HCT116 (cell line): ENCODE measurements at regions of chr12 and their contacts with region 1.

Region 1: DNA sequence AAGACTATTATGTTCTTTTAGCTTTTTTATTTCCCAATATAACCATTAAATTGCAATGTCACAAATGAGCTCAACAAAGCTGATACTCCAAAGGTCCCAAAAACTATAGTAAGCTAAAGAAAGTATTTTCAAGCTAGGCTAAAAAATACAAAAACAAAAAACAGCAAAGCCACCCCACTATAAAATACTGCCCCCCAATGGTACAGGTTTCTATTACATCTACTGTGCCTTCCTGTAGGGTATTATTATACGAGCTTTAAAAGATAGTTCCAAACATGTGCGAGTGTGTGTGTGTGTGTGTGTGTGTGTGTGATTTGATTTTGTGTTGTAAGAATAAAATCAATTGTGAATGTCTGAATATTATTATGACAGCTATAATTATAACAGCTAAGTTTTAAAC is 1.1 kb downstream of the IFNG start:
- DNase-seq: peak; percentile 40
- ATAC-seq: peak; percentile 72
- H3K4me3 ChIP-seq: no peak overlapping the region
- H3K27ac ChIP-seq: no peak overlapping the region
- H3K4me1 ChIP-seq: peaks cover 0 to 5% of the 10 kb centered on the region in 2 experiments; a peak in 1 of 4 replicates
- H3K27me3 ChIP-seq: no peaks in the 10 kb centered on the region
- CTCF ChIP-seq: peak; percentile 57 to 76 (median 60); a peak in 5 of 6 replicates
- POLR2A ChIP-seq: no peak
- RAD21 ChIP-seq: peak; percentile 66

Region 2: DNA sequence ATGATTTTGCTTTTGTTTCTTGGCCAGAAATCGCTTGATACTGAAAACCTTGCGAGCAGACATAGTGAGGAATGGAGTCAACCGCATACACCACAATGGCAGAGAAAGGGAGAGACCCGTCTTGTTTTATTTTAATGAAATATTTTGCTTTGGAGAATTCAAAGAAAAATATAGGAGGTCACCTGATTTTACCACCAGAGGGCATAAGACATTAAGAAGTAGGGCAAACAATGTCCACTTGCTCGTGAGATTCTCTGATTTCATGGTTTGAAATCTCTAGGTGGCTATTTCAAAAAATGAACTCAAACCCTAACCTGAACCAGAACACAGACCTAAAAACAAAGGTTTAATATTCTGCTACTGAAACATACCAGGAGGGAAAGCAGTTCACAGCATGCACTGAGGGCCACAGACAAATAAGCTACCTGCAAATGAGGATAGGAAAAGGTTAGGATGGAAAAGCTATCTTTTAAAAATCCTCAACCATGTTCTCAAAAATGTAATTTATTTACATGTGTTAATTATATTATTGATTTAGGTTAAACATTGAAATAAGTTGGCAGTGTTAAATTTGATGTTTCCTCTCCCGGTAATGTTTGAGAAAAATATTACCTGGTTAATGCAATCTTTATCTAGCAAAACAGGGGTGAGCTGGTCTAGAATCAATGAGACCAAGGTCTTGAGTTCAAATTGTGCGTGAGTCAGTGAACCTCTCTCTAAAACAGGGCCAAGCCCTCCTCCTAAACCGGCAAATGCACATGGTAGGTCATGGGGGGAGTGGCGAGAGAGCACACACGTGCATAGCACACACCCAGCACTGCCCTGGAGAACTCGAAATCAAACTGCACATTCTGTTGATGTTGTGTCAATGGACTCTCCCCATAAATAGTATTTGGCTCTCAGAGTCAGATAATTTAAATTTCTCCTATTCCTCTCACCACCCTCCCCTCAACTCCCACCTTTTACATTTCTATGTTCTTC is 156.7 kb before region 1 on chr12:
- CTCF ChIA-PET with region 1: interaction called, 5 read pairs
- POLR2A ChIA-PET with region 1: no interaction called
- RAD21 ChIA-PET with region 1: no interaction called
- intact Hi-C with region 1: loop called (anchors 2 kb)
- DNase-seq: no peak
- ATAC-seq: peak; percentile 58
- H3K4me3 ChIP-seq: no peak overlapping the region
- H3K27ac ChIP-seq: no peak overlapping the region
- H3K4me1 ChIP-seq: no peaks in the 10 kb centered on the region
- H3K27me3 ChIP-seq: no peaks in the 10 kb centered on the region
- CTCF ChIP-seq: peak; percentile 36 to 62 (median 50); a peak in 5 of 6 replicates
- POLR2A ChIP-seq: no peak
- RAD21 ChIP-seq: peak; percentile 57

Region 3: DNA sequence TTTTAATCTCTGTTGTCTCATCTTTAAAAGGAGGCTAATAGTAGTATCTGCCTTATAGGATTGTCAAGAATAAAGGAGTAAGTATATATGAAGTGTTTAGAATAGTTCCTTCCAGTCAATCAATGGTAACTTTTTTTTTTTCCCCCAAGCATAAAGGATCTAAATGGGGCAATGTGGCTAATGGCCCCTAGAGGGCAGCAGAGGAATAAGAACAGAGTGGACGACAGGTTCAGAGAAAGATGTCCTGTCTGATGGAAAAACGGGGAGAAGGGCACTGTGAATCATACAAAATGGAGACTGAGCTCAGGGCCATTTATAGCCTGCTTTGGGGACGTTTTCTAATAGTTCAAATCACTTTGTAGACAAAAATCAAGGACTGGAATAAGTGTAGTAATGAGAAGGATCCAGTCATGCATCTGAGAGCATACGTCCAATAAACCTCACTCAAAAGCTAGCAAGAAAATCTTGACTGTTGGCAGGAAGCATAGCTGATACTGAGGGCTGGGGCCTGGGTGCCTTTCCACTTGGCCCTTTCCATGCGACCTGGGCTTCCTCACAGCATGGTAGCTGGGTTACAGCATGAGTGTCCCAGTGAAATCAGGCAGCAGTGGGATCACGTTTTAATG is 117.9 kb before region 1 on chr12:
- CTCF ChIA-PET with region 1: interaction called, 19 read pairs
- POLR2A ChIA-PET with region 1: no interaction called
- RAD21 ChIA-PET with region 1: interaction called in 1 of 2 experiments, 3 read pairs
- intact Hi-C with region 1: no loop called
- DNase-seq: peak; percentile 65
- ATAC-seq: peak; percentile 92
- H3K4me3 ChIP-seq: no peak overlapping the region
- H3K27ac ChIP-seq: no peak overlapping the region
- H3K4me1 ChIP-seq: no peaks in the 10 kb centered on the region
- H3K27me3 ChIP-seq: no peaks in the 10 kb centered on the region
- CTCF ChIP-seq: peak; percentile 61 to 95 (median 85); a peak in 5 of 6 replicates
- POLR2A ChIP-seq: no peak
- RAD21 ChIP-seq: peak; percentile 86

Region 4: GRCh38 chr12:68113644-68114043 is 44.8 kb before region 1 on chr12:
- CTCF ChIA-PET with region 1: interaction called, 17 read pairs
- POLR2A ChIA-PET with region 1: no interaction called
- RAD21 ChIA-PET with region 1: interaction called in 1 of 2 experiments, 4 read pairs
- intact Hi-C with region 1: no loop called
- DNase-seq: peak; percentile 22
- ATAC-seq: peak; percentile 90
- H3K4me3 ChIP-seq: no peak overlapping the region
- H3K27ac ChIP-seq: no peak overlapping the region
- H3K4me1 ChIP-seq: no peaks in the 10 kb centered on the region
- H3K27me3 ChIP-seq: no peaks in the 10 kb centered on the region
- CTCF ChIP-seq: peak; percentile 28 to 66 (median 63); a peak in 5 of 6 replicates
- POLR2A ChIP-seq: no peak
- RAD21 ChIP-seq: peak; percentile 30; the same call in 1 of the 2 replicates

Region 5: DNA sequence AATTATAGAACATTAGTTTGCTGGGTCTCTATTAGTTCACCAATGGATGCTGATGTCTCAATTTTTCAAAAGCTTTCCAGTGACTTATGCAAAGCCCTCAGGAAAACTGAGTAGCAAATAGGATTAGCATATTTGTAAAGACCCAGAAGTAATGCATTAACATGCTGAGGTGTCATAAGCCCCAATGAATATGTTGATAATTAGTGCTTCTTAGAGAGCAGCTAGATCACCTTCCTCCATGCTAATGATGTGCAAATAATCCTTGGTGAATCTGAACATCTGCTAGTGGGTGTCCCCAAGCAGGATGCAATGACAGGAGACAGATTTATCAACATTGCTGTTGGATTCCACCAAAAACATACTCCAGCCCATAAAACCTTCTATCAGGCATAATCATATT is 17.9 kb before region 1 on chr12:
- CTCF ChIA-PET with region 1: interaction called, 14 read pairs
- POLR2A ChIA-PET with region 1: no interaction called
- RAD21 ChIA-PET with region 1: no interaction called
- intact Hi-C with region 1: no loop called
- DNase-seq: no peak
- ATAC-seq: no peak
- H3K4me3 ChIP-seq: no peak overlapping the region
- H3K27ac ChIP-seq: no peak overlapping the region
- H3K4me1 ChIP-seq: no peaks in the 10 kb centered on the region
- H3K27me3 ChIP-seq: no peaks in the 10 kb centered on the region
- CTCF ChIP-seq: no peak
- POLR2A ChIP-seq: no peak
- RAD21 ChIP-seq: no peak

Region 6: DNA sequence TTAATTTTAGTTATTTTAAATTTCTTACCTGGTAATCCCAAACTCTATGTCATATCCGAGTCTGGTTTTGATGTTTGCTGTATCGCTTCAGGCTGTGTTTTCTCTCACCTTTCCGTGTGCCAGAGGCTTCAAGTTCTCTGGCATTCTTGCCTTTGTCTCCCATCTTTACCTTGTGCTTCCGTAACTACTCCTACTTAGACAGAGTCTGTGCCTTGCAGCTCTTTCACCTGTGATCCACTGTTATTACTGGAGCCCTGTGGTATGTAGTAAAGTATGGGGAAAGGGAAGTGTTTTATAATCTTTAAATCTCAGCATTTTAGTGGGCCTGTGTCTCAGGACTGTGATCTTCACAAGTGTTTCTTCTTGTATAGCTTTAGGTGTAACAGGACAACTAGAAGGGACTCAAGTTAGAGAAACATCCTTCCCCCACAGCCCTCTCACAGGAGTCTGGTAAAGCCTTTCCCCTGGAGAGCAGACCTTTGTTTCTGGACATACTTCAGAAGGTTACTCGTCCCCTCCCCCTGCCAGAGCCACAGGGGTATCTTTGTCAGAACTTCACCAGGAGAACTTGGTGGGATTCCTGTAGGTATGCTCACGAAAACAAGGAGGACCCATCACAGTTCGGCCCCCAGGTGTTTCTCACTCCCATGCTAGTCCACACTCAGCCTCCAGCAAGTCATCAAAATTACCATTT is 10.0 kb before region 1 on chr12:
- CTCF ChIA-PET with region 1: interaction called, 14 read pairs
- POLR2A ChIA-PET with region 1: no interaction called
- RAD21 ChIA-PET with region 1: no interaction called
- intact Hi-C with region 1: no loop called
- DNase-seq: no peak
- ATAC-seq: no peak
- H3K4me3 ChIP-seq: no peak overlapping the region
- H3K27ac ChIP-seq: no peak overlapping the region
- H3K4me1 ChIP-seq: no peaks in the 10 kb centered on the region
- H3K27me3 ChIP-seq: no peaks in the 10 kb centered on the region
- CTCF ChIP-seq: no peak
- POLR2A ChIP-seq: no peak
- RAD21 ChIP-seq: no peak

Region 7: DNA sequence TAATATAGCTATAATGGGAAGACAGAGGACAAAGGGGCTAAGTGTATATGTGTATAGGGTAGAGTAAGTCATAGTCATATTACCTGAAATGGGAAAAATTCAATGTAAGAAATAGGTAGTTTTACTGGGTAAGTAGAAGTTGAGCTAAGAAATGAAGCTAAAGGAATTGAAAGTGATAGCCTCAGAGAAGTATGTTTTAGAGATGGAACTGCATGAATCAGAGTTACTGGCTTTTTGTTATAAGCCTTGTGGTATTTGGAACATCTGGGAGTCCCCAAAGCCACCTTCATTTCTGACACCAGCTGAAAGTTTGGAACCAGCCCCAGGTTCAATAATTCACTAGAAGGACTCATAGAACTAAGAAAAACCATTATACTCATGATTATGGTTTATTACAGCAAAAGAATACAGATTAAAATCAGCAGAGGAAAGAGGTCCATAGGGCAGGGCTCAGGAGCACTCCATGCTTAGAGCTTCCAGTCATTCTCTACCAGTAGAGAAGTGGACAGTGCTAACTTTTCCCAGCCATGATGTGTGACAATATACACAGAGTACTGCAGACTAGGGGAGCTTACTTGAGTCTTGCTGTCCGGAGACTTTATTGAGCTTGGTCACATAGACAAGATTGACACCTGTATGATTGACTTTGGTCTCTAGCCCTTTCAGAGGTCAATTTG is 10.9 kb after region 1 on chr12:
- CTCF ChIA-PET with region 1: interaction called, 13 read pairs
- POLR2A ChIA-PET with region 1: no interaction called
- RAD21 ChIA-PET with region 1: no interaction called
- intact Hi-C with region 1: no loop called
- DNase-seq: no peak
- ATAC-seq: no peak
- H3K4me3 ChIP-seq: no peak overlapping the region
- H3K27ac ChIP-seq: no peak overlapping the region
- H3K4me1 ChIP-seq: no peaks in the 10 kb centered on the region
- H3K27me3 ChIP-seq: no peaks in the 10 kb centered on the region
- CTCF ChIP-seq: no peak
- POLR2A ChIP-seq: no peak
- RAD21 ChIP-seq: no peak

Region 8: GRCh38 chr12:68896881-68897540 is 738.6 kb after region 1 on chr12:
- CTCF ChIA-PET with region 1: no interaction called
- POLR2A ChIA-PET with region 1: no interaction called
- RAD21 ChIA-PET with region 1: no interaction called
- intact Hi-C with region 1: no loop called
- DNase-seq: no peak
- ATAC-seq: no peak
- H3K4me3 ChIP-seq: no peak overlapping the region
- H3K27ac ChIP-seq: no peak overlapping the region
- H3K4me1 ChIP-seq: peaks cover 0 to 5% of the 10 kb centered on the region in 2 experiments; a peak in 1 of 4 replicates
- H3K27me3 ChIP-seq: no peaks in the 10 kb centered on the region
- CTCF ChIP-seq: no peak
- POLR2A ChIP-seq: no peak
- RAD21 ChIP-seq: no peak